AG04450 (cell line): ENCODE measurements at regions of chr18 and their contacts with region 1.

Region 1: GRCh38 chr18:5237723-5238370 is 40.8 kb upstream of the AKAIN1 start:
- DNase-seq: peak; percentile 53
- H3K4me3 ChIP-seq: peak overlapping the region; percentile 84
- H3K27ac ChIP-seq: peak overlapping the region; percentile 100
- H3K27me3 ChIP-seq: no peaks in the 10 kb centered on the region
- CTCF ChIP-seq: peak; percentile 11; the same call in 1 of the 2 replicates

Region 2: GRCh38 chr18:5103286-5103685 is 134.6 kb before region 1 on chr18:
- CTCF ChIA-PET with region 1: no interaction called
- POLR2A ChIA-PET with region 1: no interaction called
- DNase-seq: no peak
- H3K4me3 ChIP-seq: no peak overlapping the region
- H3K27ac ChIP-seq: no peak overlapping the region
- H3K27me3 ChIP-seq: no peaks in the 10 kb centered on the region
- CTCF ChIP-seq: no peak

Region 3: DNA sequence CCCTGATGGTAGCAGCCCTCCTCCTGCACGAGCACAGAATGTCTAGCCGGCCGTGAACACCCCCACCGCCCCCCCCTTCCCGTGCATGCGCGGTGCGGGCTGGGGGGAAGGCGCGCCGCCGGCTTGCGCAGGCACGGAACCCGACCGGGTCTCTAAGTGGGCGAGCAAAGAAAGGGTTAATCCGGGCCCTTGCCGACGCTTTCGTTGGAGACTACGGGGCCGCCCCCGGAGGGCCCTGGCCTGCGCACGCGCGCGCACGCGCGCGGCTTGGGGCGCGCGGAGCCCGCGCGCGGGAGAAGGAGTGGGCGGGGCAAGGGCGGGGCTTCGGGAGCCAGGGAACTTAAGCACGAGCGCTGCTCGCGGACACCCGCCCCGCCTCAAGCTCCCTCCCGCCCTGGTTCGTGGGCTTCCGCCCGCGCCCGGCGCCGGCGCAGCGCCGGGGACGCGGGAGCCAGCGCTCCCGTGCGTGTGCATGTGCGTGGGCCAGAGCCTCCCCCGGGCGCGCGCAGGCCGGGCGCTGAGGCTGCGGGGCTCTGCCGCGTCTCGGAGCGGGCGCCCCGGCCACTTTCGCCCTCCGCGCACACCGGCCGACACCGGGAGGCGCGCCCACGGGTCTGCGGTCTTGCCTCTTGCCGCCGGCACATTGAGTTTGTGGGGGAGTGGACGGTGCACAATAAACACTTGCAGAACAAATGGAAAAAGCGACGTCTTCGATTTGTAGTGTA is 58.3 kb after region 1 on chr18:
- CTCF ChIA-PET with region 1: no interaction called
- POLR2A ChIA-PET with region 1: interaction called, 39 read pairs
- DNase-seq: peak; percentile 90
- H3K4me3 ChIP-seq: peak overlapping the region; percentile 73
- H3K27ac ChIP-seq: peak overlapping the region; percentile 92
- H3K27me3 ChIP-seq: peaks cover 13% of the 10 kb centered on the region
- CTCF ChIP-seq: no peak